Naive thymus-derived CD4-positive, alpha-beta T cell (primary cell): ENCODE measurements at regions of chr1 and their contacts with region 1.

Region 1: DNA sequence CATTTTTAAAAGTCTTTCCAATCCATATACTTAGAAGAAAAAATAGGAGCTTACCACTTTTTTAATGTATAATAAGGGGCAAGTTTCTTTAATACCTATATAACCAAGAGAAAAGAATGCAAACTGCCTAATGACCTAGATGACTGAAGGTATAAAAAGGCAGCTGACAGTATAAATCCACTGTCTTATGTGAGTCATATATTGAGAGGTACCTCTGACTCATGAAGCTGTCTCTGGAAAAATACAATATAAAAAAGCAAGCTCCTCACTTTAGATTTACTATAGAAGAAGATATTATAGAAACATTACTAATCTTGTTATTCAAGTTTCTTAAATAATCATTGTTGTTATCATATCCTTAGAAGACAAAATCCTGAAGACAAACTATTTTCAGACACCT is 144.2 kb downstream of the VAV3 start:
- DNase-seq: no peak
- ATAC-seq: no peak
- H3K4me3 ChIP-seq: no peak overlapping the region
- H3K4me3 Mint-ChIP-seq: no peak overlapping the region
- H3K27ac ChIP-seq: no peak overlapping the region
- H3K27ac Mint-ChIP-seq: peak overlapping the region in 3 of 9 donors; percentile 2 to 16 (median 8)
- H3K4me1 ChIP-seq: peaks cover 0 to 7% of the 10 kb centered on the region in 2 donors
- H3K4me1 Mint-ChIP-seq: peaks cover 7 to 46% (median 13%) of the 10 kb centered on the region in 7 donors
- H3K27me3 ChIP-seq: no peaks in the 10 kb centered on the region
- H3K27me3 Mint-ChIP-seq: no peaks in the 10 kb centered on the region

Region 2: GRCh38 chr1:107220036-107220435 is 600.8 kb before region 1 on chr1:
- CTCF ChIA-PET with region 1: no interaction called
- POLR2A ChIA-PET with region 1: no interaction called
- intact Hi-C with region 1: no loop called
- DNase-seq: no peak
- ATAC-seq: no peak
- H3K4me3 ChIP-seq: no peak overlapping the region
- H3K4me3 Mint-ChIP-seq: no peak overlapping the region
- H3K27ac ChIP-seq: no peak overlapping the region
- H3K27ac Mint-ChIP-seq: no peak overlapping the region
- H3K4me1 ChIP-seq: no peaks in the 10 kb centered on the region
- H3K4me1 Mint-ChIP-seq: no peaks in the 10 kb centered on the region
- H3K27me3 ChIP-seq: no peaks in the 10 kb centered on the region
- H3K27me3 Mint-ChIP-seq: peaks cover 0 to 13% (median 4%) of the 10 kb centered on the region in 5 donors

Region 3: GRCh38 chr1:107771377-107771776 is 49.4 kb before region 1 on chr1:
- CTCF ChIA-PET with region 1: no interaction called
- POLR2A ChIA-PET with region 1: no interaction called
- intact Hi-C with region 1: loop called in 1 of 2 experiments (anchors 5 kb)
- DNase-seq: no peak
- ATAC-seq: no peak
- H3K4me3 ChIP-seq: no peak overlapping the region
- H3K4me3 Mint-ChIP-seq: no peak overlapping the region
- H3K27ac ChIP-seq: no peak overlapping the region
- H3K27ac Mint-ChIP-seq: no peak overlapping the region
- H3K4me1 ChIP-seq: no peaks in the 10 kb centered on the region
- H3K4me1 Mint-ChIP-seq: no peaks in the 10 kb centered on the region
- H3K27me3 ChIP-seq: no peaks in the 10 kb centered on the region
- H3K27me3 Mint-ChIP-seq: no peaks in the 10 kb centered on the region